HCT116 (cell line): ENCODE measurements at regions of chr9 and their contacts with region 1.

Region 1: GRCh38 chr9:113682297-113682771 is 193.8 kb upstream of the ZNF618 start:
- DNase-seq: peak; percentile 83
- ATAC-seq: peak; percentile 85
- H3K4me3 ChIP-seq: peak overlapping the region in 1 of 2 experiments; percentile 24; a peak in 2 of 4 replicates
- H3K27ac ChIP-seq: no peak overlapping the region
- H3K4me1 ChIP-seq: peaks cover 0 to 6% of the 10 kb centered on the region in 2 experiments; a peak in 2 of 4 replicates
- H3K27me3 ChIP-seq: peaks cover 15% of the 10 kb centered on the region
- CTCF ChIP-seq: peak; percentile 74 to 96 (median 93)
- POLR2A ChIP-seq: no peak
- RAD21 ChIP-seq: peak; percentile 89

Region 2: GRCh38 chr9:112793213-112793810 is 889.0 kb before region 1 on chr9:
- CTCF ChIA-PET with region 1: no interaction called
- POLR2A ChIA-PET with region 1: no interaction called
- RAD21 ChIA-PET with region 1: no interaction called
- intact Hi-C with region 1: no loop called
- DNase-seq: peak; percentile 51
- ATAC-seq: peak; percentile 99
- H3K4me3 ChIP-seq: no peak overlapping the region
- H3K27ac ChIP-seq: no peak overlapping the region
- H3K4me1 ChIP-seq: peaks cover 0 to 4% of the 10 kb centered on the region in 2 experiments; a peak in 2 of 4 replicates
- H3K27me3 ChIP-seq: no peaks in the 10 kb centered on the region
- CTCF ChIP-seq: peak; percentile 64 to 94 (median 86); a peak in 5 of 6 replicates
- POLR2A ChIP-seq: no peak
- RAD21 ChIP-seq: peak; percentile 91

Region 3: GRCh38 chr9:114304416-114305188 is 622.3 kb after region 1 on chr9:
- CTCF ChIA-PET with region 1: no interaction called
- POLR2A ChIA-PET with region 1: no interaction called
- RAD21 ChIA-PET with region 1: no interaction called
- intact Hi-C with region 1: loop called (anchors 1 kb)
- DNase-seq: no peak
- ATAC-seq: no peak
- H3K4me3 ChIP-seq: no peak overlapping the region
- H3K27ac ChIP-seq: no peak overlapping the region
- H3K4me1 ChIP-seq: peaks cover 0 to 3% of the 10 kb centered on the region in 2 experiments; a peak in 1 of 4 replicates
- H3K27me3 ChIP-seq: no peaks in the 10 kb centered on the region
- CTCF ChIP-seq: no peak
- POLR2A ChIP-seq: no peak
- RAD21 ChIP-seq: no peak